Colonic mucosa (tissue), 4 donors: ENCODE measurements at regions of chr1 and their contacts with region 1.

Region 1: GRCh38 chr1:179190861-179191260 is 38.6 kb downstream of the ABL2 start:
- DNase-seq: no peak
- H3K4me3 ChIP-seq: no peak overlapping the region
- H3K27ac ChIP-seq: no peak overlapping the region
- H3K4me1 ChIP-seq: no peaks in the 10 kb centered on the region
- H3K27me3 ChIP-seq: no peaks in the 10 kb centered on the region
- CTCF ChIP-seq: no peak

Region 2: DNA sequence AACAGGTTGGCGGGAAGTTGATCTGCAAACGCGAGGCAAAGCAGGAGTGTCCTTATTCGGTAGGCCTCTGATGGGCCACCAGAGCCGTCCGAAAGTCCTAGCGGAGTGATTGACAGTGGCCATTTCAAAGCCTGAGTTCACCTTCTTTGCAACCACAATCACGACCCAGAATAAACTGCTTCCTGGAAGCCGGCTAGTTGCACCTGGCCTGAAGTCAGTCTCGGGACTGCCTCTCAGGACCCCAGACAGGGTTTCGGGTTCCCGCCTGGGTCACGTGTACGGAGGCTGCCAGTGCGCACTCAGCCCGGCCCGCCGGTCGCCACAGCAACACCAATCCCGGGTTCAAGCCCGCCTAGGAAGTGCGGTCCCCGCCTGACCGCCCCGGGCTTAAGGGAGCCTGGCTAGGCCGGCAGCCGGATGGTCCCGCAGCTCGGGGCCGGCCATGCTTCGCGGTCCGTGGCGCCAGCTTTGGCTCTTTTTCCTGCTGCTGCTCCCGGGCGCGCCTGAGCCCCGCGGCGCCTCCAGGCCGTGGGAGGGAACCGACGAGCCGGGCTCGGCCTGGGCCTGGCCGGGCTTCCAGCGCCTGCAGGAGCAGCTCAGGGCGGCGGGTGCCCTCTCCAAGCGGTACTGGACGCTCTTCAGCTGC is 109.1 kb before region 1 on chr1 and contains the start of gene TOR3A:
- intact Hi-C with region 1: loop called (anchors 10 kb)
- DNase-seq: peak; percentile 96
- H3K4me3 ChIP-seq: peak within 1 kb of the TSS; percentile 99
- H3K27ac ChIP-seq: peak within 1 kb of the TSS; percentile 92
- H3K4me1 ChIP-seq: peaks cover 5% of the 10 kb centered on the region
- H3K27me3 ChIP-seq: no peaks in the 10 kb centered on the region
- CTCF ChIP-seq: no peak
- total RNA-seq, gene TOR3A: 21.6 to 41.1 TPM

Region 3: DNA sequence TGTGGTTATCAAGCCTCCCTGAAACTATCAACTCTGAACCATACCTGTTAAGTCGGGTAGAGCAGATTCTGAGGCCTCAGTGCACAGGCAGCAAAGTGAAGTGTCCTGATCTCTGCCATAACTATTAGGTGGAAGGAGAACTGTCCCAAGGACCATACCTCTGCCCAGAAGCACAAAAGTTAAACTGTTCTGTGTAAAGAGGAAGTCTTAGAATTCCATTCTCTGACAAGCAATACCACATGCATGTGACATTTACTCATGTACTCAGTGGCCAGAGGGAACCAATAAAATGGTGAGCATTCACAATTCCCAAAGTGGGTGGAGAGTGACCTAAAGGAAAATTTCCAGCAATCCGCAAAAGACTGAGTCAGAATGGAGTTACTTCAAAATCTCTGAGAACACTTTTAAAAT is 48.0 kb before region 1 on chr1:
- intact Hi-C with region 1: no loop called
- DNase-seq: no peak
- H3K4me3 ChIP-seq: peak overlapping the region; percentile 5
- H3K27ac ChIP-seq: peak overlapping the region; percentile 37
- H3K4me1 ChIP-seq: no peaks in the 10 kb centered on the region
- H3K27me3 ChIP-seq: no peaks in the 10 kb centered on the region
- CTCF ChIP-seq: no peak

Region 4: DNA sequence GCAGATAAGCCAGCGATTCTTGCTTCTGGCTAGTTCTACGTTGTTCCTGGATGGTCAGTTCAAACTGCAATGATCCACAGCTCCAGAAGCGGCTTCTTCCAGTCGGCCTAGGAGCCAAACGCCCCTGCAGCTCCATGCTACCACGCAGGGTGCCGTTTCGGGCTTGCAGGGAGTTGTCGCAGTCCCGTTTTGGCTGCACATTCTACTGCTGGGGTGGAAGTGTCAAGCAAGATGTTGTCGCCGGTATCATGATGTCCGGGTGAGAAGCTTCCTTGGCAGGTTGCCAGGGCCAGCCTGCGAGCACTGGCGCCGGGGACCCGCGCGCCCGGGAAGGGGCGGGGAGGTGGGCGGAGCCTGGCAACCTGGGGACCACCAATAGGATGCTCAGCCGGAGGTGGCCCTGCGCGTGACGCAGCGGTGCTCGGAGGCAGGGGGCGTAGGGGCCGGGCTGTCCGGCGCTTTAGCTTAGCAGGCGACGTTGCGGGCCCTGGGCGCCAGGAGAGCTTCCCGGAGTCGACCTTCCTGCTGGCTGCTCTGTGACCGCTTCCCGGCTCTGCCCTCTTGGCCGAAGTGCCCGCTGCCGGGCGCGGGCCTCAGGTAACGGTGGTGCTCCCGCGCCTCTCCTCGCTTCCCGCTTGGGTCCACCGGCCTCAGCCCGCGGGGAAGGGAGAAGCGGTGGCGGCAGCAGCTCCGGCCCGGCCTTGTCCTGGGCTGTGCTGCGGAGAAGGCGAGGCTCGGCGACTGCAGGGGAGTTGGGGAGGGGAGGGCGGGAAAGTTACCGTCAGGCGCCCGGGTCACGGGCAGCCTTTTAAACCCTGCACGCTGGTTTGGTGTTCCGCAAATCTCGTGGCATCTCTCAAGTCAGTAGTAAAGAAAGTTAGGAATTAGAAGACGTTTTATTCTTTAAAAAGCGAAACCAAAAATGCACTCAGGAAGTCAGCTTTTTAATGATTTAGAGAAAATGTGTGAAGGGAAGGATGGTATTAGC is 102.8 kb after region 1 on chr1 and contains the start of gene SOAT1:
- intact Hi-C with region 1: no loop called
- DNase-seq: peak; percentile 98
- H3K4me3 ChIP-seq: peak within 1 kb of the TSS; percentile 63
- H3K27ac ChIP-seq: peak within 1 kb of the TSS; percentile 83
- H3K4me1 ChIP-seq: peaks cover 4% of the 10 kb centered on the region
- H3K27me3 ChIP-seq: no peaks in the 10 kb centered on the region
- CTCF ChIP-seq: no peak
- total RNA-seq, gene SOAT1: 36.1 to 37.9 TPM